CD8-positive, alpha-beta T cell (primary cell): ENCODE measurements at regions of chr2 and their contacts with region 1.

Region 1: GRCh38 chr2:131521961-131522794 is 5.5 kb upstream of the CCDC74A start:
- DNase-seq: no peak
- ATAC-seq: no peak
- H3K4me3 ChIP-seq: no peak overlapping the region
- H3K4me3 Mint-ChIP-seq: no peak overlapping the region
- H3K27ac ChIP-seq: no peak overlapping the region
- H3K27ac Mint-ChIP-seq: no peak overlapping the region
- H3K4me1 ChIP-seq: peaks cover under 1% of the 10 kb centered on the region
- H3K4me1 Mint-ChIP-seq: no peaks in the 10 kb centered on the region
- H3K27me3 ChIP-seq: no peaks in the 10 kb centered on the region
- H3K27me3 Mint-ChIP-seq: no peaks in the 10 kb centered on the region
- CTCF ChIP-seq: no peak

Region 2: GRCh38 chr2:131492418-131493198 is 29.6 kb before region 1 on chr2:
- CTCF ChIA-PET with region 1: interaction called, 4 read pairs
- POLR2A ChIA-PET with region 1: no interaction called
- intact Hi-C with region 1: loop called (anchors 1 to 2 kb)
- DNase-seq: peak; percentile 86 to 98 (median 93)
- ATAC-seq: peak; percentile 73
- H3K4me3 ChIP-seq: peak overlapping the region; percentile 86 to 87
- H3K4me3 Mint-ChIP-seq: peak overlapping the region; percentile 95
- H3K27ac ChIP-seq: peak overlapping the region; percentile 95 to 97
- H3K27ac Mint-ChIP-seq: peak overlapping the region; percentile 98
- H3K4me1 ChIP-seq: peaks cover 19% of the 10 kb centered on the region
- H3K4me1 Mint-ChIP-seq: peaks cover 49% of the 10 kb centered on the region
- H3K27me3 ChIP-seq: no peaks in the 10 kb centered on the region
- H3K27me3 Mint-ChIP-seq: no peaks in the 10 kb centered on the region
- CTCF ChIP-seq: peak; percentile 88